ENCODE measurements at regions of chr15 and their contacts with region 1.

Region 1: GRCh38 chr15:57527382-57528091 is 64.2 kb upstream of the MYZAP start:
- DNase-seq: peak in 1 of 2 donors; percentile 58
- ATAC-seq: peak; percentile 62 to 78 (median 71)
- H3K4me3 ChIP-seq: no peak overlapping the region
- H3K27ac ChIP-seq: no peak overlapping the region
- H3K4me1 ChIP-seq: peaks cover 0 to 18% (median 3%) of the 10 kb centered on the region in 9 donors
- H3K27me3 ChIP-seq: no peaks in the 10 kb centered on the region
- CTCF ChIP-seq: peak; percentile 49 to 81 (median 66)

Region 2: DNA sequence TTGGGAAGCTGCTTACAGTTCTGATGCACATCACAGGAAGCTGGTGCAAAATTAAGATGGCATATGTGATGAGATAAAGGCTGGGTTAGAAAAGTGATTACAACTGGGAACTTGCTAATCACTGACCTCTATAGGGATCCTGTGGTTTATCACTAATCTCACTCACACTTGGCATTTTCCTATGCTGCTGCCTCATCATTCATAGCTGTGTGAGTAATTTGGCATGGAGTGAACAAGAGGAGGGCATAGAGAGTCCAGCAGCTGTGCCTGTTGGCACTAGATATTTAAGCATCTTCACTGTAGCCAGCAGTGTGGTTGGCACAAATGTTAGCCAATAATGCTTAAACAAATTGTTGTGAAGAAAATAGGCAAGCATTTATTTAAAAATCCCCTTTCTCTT is 368.9 kb before region 1 on chr15:
- intact Hi-C with region 1: loop called in 1 of 10 experiments (anchors 10 kb)
- DNase-seq: peak in 1 of 2 donors; percentile 25
- ATAC-seq: peak; percentile 25 to 94 (median 84)
- H3K4me3 ChIP-seq: no peak overlapping the region
- H3K27ac ChIP-seq: peak overlapping the region in 7 of 10 donors; percentile 5 to 77 (median 68)
- H3K4me1 ChIP-seq: peaks cover 3 to 50% (median 16%) of the 10 kb centered on the region in 9 donors
- H3K27me3 ChIP-seq: no peaks in the 10 kb centered on the region
- CTCF ChIP-seq: no peak

Region 3: GRCh38 chr15:57395292-57395691 is 132.2 kb before region 1 on chr15:
- intact Hi-C with region 1: no loop called
- DNase-seq: no peak
- ATAC-seq: peak in 5 of 8 donors; percentile 23 to 81 (median 70)
- H3K4me3 ChIP-seq: no peak overlapping the region
- H3K27ac ChIP-seq: peak overlapping the region in 3 of 10 donors; percentile 20 to 46 (median 29)
- H3K4me1 ChIP-seq: peaks cover 0 to 37% (median 12%) of the 10 kb centered on the region in 9 donors
- H3K27me3 ChIP-seq: no peaks in the 10 kb centered on the region
- CTCF ChIP-seq: no peak

Region 4: DNA sequence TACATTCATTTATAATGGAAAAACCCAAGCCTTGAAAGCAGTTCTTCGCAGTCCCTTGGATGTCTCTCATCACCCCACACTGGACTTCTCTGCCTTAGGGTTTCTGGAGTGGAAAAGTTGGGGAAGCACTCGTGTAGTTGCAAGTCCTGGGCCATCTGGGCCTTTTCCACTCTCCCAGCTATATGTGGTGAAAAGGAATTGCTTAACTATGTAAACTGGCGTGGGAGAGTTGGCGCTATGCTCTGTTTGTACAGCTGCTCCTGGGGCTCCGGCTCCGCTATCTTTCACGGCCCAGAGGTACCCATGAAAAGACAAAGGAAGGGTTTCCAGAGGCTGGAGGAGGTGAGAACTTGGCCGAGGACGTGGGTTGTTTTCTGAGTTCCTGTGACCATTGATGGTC is 16.9 kb before region 1 on chr15:
- intact Hi-C with region 1: no loop called
- DNase-seq: peak; percentile 48 to 76
- ATAC-seq: peak; percentile 63 to 89 (median 76)
- H3K4me3 ChIP-seq: no peak overlapping the region
- H3K27ac ChIP-seq: peak overlapping the region in 6 of 10 donors; percentile 50 to 74 (median 60)
- H3K4me1 ChIP-seq: peaks cover 2 to 55% (median 31%) of the 10 kb centered on the region in 9 donors
- H3K27me3 ChIP-seq: no peaks in the 10 kb centered on the region
- CTCF ChIP-seq: no peak

Measured in heart right ventricle (tissue), 16 donors.